OCI-LY7 (cell line): ENCODE measurements at regions of chr4 and their contacts with region 1.

Region 1: DNA sequence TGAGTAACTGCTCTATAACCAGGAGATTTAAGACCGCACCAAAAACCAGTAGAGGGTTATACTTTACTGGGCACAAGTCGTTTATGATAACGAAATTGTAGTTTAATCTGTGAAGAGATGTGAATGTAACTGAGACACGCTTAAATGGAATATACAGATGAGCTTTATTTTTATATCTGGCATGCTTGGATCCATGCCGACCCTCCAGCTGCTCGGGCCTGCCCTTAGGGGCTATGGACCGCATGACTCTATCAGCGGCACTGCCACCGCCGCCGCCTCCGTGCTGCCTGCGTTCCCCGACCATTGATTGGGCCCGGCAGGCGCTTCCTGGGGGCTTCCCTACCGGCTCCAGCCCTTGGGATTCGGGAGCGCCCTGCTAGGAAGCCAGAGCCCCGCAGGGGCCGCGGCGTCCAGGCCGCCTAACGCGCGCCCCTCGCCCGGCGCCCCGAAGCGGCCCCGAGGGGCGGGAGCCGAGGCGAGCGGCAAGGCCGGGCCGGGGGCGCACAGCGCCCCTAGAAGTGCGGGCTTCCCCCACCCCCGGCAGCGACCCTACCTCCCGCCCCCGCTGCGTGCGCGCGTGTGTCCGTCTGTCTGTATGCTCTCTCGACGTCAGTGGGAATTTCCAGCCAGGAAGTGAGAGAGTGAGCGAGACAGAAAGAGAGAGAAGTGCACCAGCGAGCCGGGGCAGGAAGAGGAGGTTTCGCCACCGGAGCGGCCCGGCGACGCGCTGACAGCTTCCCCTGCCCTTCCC is at the start of gene NFKB1:
- DNase-seq: peak; percentile 78
- H3K4me3 ChIP-seq: peak within 1 kb of the TSS; percentile 97
- H3K27ac ChIP-seq: peak within 1 kb of the TSS; percentile 77
- H3K4me1 ChIP-seq: peaks cover 26% of the 10 kb centered on the region
- CTCF ChIP-seq: no peak
- total RNA-seq, gene NFKB1: 20.7 and 23.1 TPM in 2 replicates

Region 2: GRCh38 chr4:102299354-102300107 is 201.3 kb before region 1 on chr4:
- CTCF ChIA-PET with region 1: no interaction called
- POLR2A ChIA-PET with region 1: no interaction called
- intact Hi-C with region 1: no loop called
- DNase-seq: peak; percentile 56
- H3K4me3 ChIP-seq: no peak overlapping the region
- H3K27ac ChIP-seq: no peak overlapping the region
- H3K4me1 ChIP-seq: peaks cover 10% of the 10 kb centered on the region
- CTCF ChIP-seq: peak; percentile 90

Region 3: GRCh38 chr4:102430461-102430910 is 70.4 kb before region 1 on chr4:
- CTCF ChIA-PET with region 1: no interaction called
- POLR2A ChIA-PET with region 1: interaction called, 5 read pairs
- intact Hi-C with region 1: loop called (anchors 2 kb)
- DNase-seq: no peak
- H3K4me3 ChIP-seq: peak overlapping the region; percentile 69
- H3K27ac ChIP-seq: peak overlapping the region; percentile 48
- H3K4me1 ChIP-seq: peaks cover 6% of the 10 kb centered on the region
- CTCF ChIP-seq: no peak

Region 4: DNA sequence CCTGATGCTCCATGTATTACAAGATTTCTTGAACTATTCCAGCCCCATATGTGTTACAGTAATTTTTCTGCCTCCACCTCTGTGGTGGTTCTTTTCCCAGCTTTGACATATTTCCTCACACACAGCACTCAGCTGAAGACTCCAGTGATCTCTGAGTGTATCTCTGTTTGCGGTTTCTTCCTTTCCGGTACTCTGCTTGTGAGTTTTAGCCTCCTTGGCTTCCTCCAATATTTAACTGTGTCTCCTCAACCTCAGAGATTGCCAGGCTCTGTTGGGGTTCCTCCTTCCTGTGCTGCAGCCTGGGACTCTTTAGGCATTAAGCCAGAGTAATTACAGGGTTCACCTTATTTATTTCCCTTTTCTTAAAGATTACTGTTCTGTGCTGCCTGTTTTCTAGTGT is 73.4 kb after region 1 on chr4:
- CTCF ChIA-PET with region 1: no interaction called
- POLR2A ChIA-PET with region 1: no interaction called
- intact Hi-C with region 1: no loop called
- DNase-seq: no peak
- H3K4me3 ChIP-seq: no peak overlapping the region
- H3K27ac ChIP-seq: no peak overlapping the region
- H3K4me1 ChIP-seq: peaks cover 7% of the 10 kb centered on the region
- CTCF ChIP-seq: no peak

Region 5: GRCh38 chr4:102663073-102663472 is 162.2 kb after region 1 on chr4:
- CTCF ChIA-PET with region 1: no interaction called
- POLR2A ChIA-PET with region 1: no interaction called
- intact Hi-C with region 1: no loop called
- DNase-seq: no peak
- H3K4me3 ChIP-seq: no peak overlapping the region
- H3K27ac ChIP-seq: no peak overlapping the region
- H3K4me1 ChIP-seq: no peaks in the 10 kb centered on the region
- CTCF ChIP-seq: no peak

Region 6: DNA sequence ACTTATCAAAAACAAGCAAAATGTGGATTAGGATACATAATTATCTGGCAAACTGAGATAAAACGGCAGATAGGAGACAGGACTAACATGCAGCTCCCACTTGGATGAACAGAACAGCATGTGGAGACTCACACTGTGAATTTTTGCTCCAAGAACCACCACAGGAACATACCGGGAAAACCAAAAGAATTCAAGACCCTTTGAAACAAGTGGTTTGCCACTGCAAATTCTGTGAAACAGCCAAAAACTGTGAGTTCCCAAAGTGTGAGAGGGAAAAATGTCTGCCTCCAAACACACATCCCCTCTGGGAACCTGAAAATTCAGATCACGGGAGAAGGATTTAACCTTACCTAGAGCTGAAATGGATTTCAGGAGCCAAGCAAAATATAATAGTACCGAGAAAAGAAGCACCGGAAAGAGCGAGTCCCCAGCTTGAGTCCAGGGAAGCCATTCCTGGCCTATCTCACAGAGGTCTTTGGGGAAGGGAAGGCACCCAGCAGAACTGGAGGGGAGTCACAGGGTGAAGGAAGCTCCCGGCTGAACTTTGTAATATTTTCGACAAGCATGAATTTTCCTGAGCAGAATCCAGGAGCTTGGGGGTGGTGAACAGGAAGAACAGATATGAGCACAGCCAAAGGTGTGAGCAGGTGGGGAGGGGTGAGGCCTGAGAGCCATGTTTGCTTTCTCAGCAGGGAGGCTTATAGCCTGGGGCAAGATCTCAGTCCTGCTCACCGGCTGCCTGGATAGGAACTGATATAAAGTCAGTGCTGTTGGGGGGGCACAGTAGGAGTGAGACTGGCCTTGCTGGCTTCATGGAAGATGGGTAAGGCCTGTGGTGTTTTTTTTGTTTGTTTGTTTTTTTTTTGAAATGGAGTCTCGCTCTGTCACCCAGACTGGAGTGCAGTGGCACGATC is 236.0 kb after region 1 on chr4:
- CTCF ChIA-PET with region 1: no interaction called
- POLR2A ChIA-PET with region 1: no interaction called
- intact Hi-C with region 1: no loop called
- DNase-seq: no peak
- H3K4me3 ChIP-seq: no peak overlapping the region
- H3K27ac ChIP-seq: no peak overlapping the region
- H3K4me1 ChIP-seq: peaks cover 6% of the 10 kb centered on the region
- CTCF ChIP-seq: no peak

Region 7: GRCh38 chr4:102760645-102761295 is 259.9 kb after region 1 on chr4 and contains the start of gene MANBA:
- CTCF ChIA-PET with region 1: no interaction called
- POLR2A ChIA-PET with region 1: no interaction called
- intact Hi-C with region 1: loop called (anchors 2 kb)
- DNase-seq: peak; percentile 91
- H3K4me3 ChIP-seq: peak within 1 kb of the TSS; percentile 74
- H3K27ac ChIP-seq: peak within 1 kb of the TSS; percentile 40
- H3K4me1 ChIP-seq: peaks cover 17% of the 10 kb centered on the region
- CTCF ChIP-seq: no peak
- total RNA-seq, gene MANBA: 15.8 and 30.0 TPM in 2 replicates

Region 8: GRCh38 chr4:102868781-102869568 is 368.1 kb after region 1 on chr4 and contains the start of gene CISD2:
- CTCF ChIA-PET with region 1: no interaction called
- POLR2A ChIA-PET with region 1: interaction called, 3 read pairs
- intact Hi-C with region 1: loop called (anchors 2 kb)
- DNase-seq: peak; percentile 94
- H3K4me3 ChIP-seq: peak within 1 kb of the TSS; percentile 74
- H3K27ac ChIP-seq: peak within 1 kb of the TSS; percentile 94
- H3K4me1 ChIP-seq: peaks cover 42% of the 10 kb centered on the region
- CTCF ChIP-seq: no peak
- total RNA-seq, gene CISD2: 37.6 and 41.1 TPM in 2 replicates

Region 9: GRCh38 chr4:103075901-103076739 is 575.2 kb after region 1 on chr4:
- CTCF ChIA-PET with region 1: no interaction called
- POLR2A ChIA-PET with region 1: interaction called, 3 read pairs
- intact Hi-C with region 1: loop called (anchors 1 kb)
- DNase-seq: peak; percentile 79
- H3K4me3 ChIP-seq: peak overlapping the region; percentile 79
- H3K27ac ChIP-seq: peak overlapping the region; percentile 86
- H3K4me1 ChIP-seq: peaks cover 51% of the 10 kb centered on the region
- CTCF ChIP-seq: peak; percentile 39; the same call in 1 of the 2 replicates

Region 10: GRCh38 chr4:103099691-103100392 is 599.0 kb after region 1 on chr4 and contains the start of gene BDH2:
- CTCF ChIA-PET with region 1: no interaction called
- POLR2A ChIA-PET with region 1: no interaction called
- intact Hi-C with region 1: loop called (anchors 5 kb)
- DNase-seq: peak; percentile 94
- H3K4me3 ChIP-seq: peak within 1 kb of the TSS; percentile 69
- H3K27ac ChIP-seq: no peak within 1 kb of the TSS
- H3K4me1 ChIP-seq: peaks cover 8% of the 10 kb centered on the region
- CTCF ChIP-seq: peak; percentile 90
- total RNA-seq, gene BDH2: 28.2 and 35.2 TPM in 2 replicates

Region 11: GRCh38 chr4:103198111-103198765 is 697.4 kb after region 1 on chr4 and contains the start of gene CENPE:
- CTCF ChIA-PET with region 1: no interaction called
- POLR2A ChIA-PET with region 1: no interaction called
- intact Hi-C with region 1: loop called (anchors 10 kb)
- DNase-seq: peak; percentile 92
- H3K4me3 ChIP-seq: peak within 1 kb of the TSS; percentile 86
- H3K27ac ChIP-seq: peak within 1 kb of the TSS; percentile 41
- H3K4me1 ChIP-seq: peaks cover 20% of the 10 kb centered on the region
- CTCF ChIP-seq: no peak
- total RNA-seq, gene CENPE: 23.6 and 39.4 TPM in 2 replicates